OCI-LY7 (cell line): ENCODE measurements at regions of chr16 and their contacts with region 1.

Region 1: DNA sequence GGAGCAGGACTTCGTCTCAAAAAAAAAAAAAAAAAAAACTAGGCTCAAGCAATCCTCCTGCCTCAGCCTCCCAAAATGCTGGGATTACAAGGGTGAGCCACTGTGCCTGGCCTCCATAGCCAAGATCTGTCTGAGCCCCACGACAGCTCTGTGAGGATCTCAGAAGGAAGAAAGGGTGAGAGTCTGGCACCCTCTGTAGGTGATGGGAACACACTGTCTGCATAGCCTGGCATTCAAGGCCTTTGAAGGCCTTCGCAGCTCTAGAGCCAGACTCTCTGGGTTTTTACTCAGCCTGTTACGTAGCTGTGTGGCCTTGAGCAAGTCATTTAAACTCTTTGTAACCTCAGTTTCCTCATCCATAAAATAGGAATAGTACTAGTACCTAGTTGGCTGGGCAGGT is 6.3 kb upstream of the XPO6 start:
- DNase-seq: peak; percentile 60
- H3K4me3 ChIP-seq: no peak overlapping the region
- H3K27ac ChIP-seq: no peak overlapping the region
- H3K4me1 ChIP-seq: no peaks in the 10 kb centered on the region
- CTCF ChIP-seq: peak; percentile 70

Region 2: DNA sequence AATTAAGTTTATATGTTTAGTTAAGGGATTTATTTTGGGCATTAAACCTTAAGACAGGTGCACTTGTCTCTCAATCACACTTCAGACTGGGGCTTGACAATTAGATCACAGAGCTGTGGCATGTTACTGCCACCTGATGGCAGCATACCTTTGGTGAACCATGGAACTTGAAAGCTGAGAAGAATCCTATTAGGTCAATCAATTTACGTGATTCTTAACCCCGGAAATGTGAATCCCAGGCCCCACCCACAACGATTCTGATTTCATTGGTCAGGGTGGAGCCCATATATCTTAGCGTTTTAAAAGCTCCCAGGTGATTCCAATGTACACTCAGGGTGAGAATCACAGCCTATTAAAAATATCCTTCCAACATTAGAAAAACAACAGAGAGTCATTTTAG is 245.6 kb before region 1 on chr16:
- CTCF ChIA-PET with region 1: no interaction called
- POLR2A ChIA-PET with region 1: no interaction called
- intact Hi-C with region 1: loop called (anchors 5 kb)
- DNase-seq: peak; percentile 66
- H3K4me3 ChIP-seq: no peak overlapping the region
- H3K27ac ChIP-seq: no peak overlapping the region
- H3K4me1 ChIP-seq: no peaks in the 10 kb centered on the region
- CTCF ChIP-seq: peak; percentile 90